ENCODE measurements at regions of chr1 and their contacts with region 1.

Region 1: GRCh38 chr1:113140588-113141446 is 67.8 kb downstream of the LRIG2 start:
- DNase-seq: peak in 1 of 2 donors; percentile 73
- H3K4me3 ChIP-seq: peak overlapping the region in 1 of 2 donors; percentile 25
- H3K27ac ChIP-seq: no peak overlapping the region
- H3K4me1 ChIP-seq: peaks cover 0 to 2% of the 10 kb centered on the region in 2 donors
- H3K27me3 ChIP-seq: no peaks in the 10 kb centered on the region
- CTCF ChIP-seq: peak; percentile 59 to 86 (median 73)

Region 2: GRCh38 chr1:112866151-112866550 is 274.7 kb before region 1 on chr1:
- intact Hi-C with region 1: no loop called
- DNase-seq: no peak
- H3K4me3 ChIP-seq: no peak overlapping the region
- H3K27ac ChIP-seq: no peak overlapping the region
- H3K4me1 ChIP-seq: no peaks in the 10 kb centered on the region
- H3K27me3 ChIP-seq: no peaks in the 10 kb centered on the region
- CTCF ChIP-seq: no peak

Region 3: DNA sequence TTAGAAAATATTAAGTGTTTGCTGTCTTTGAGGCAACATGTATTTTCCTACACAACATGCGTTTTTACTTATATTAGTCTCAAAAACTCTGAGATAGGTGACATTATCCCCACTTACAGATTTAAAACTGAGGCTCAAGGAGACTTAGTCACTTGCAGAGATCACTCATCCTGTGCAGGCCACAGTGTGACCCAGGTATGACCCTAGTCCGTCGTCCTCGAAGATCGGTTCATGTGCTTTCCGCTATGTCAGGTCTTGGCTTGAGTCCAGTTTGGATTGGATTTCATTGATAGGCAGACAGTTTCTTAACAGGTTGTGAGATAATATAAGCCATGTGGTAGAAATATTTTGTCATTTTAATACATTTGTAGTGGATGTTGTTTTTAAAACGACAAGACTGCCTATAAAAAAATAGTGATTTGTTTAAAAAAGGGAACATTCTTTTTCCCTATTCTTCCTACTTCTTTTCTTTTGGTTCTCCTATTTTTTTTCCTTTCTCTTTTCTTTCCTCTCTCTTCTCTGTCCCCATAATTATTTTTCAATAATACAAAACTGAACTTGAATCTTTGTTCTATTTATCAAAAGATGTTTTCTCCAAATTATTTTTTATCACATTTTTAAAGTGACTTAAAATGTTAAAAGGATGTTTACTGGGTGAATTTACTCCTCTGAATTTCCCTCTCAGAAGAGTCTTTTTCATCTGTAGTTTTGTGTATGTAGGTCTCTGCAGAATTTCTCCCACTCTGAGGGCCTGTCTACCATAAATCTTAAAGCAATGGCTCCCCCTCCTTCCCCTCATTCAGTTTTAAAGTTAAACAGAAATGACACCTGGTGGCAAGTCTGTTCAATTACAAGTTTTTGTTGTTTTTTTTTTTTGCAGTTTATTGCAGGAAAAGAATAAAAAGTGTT is 536.7 kb after region 1 on chr1:
- intact Hi-C with region 1: loop called (anchors 1 kb)
- DNase-seq: no peak
- H3K4me3 ChIP-seq: no peak overlapping the region
- H3K27ac ChIP-seq: no peak overlapping the region
- H3K4me1 ChIP-seq: no peaks in the 10 kb centered on the region
- H3K27me3 ChIP-seq: no peaks in the 10 kb centered on the region
- CTCF ChIP-seq: peak in 2 of 3 experiments; percentile 61 to 71